PC-3 (cell line): ENCODE measurements at regions of chr2 and their contacts with region 1.

Region 1: GRCh38 chr2:201949181-201949926 is 84.3 kb upstream of the FZD7 start:
- DNase-seq: no peak
- ATAC-seq: no peak
- H3K4me3 ChIP-seq: no peak overlapping the region
- H3K27ac ChIP-seq: no peak overlapping the region
- H3K4me1 ChIP-seq: no peaks in the 10 kb centered on the region
- H3K27me3 ChIP-seq: no peaks in the 10 kb centered on the region
- CTCF ChIP-seq: no peak

Region 2: DNA sequence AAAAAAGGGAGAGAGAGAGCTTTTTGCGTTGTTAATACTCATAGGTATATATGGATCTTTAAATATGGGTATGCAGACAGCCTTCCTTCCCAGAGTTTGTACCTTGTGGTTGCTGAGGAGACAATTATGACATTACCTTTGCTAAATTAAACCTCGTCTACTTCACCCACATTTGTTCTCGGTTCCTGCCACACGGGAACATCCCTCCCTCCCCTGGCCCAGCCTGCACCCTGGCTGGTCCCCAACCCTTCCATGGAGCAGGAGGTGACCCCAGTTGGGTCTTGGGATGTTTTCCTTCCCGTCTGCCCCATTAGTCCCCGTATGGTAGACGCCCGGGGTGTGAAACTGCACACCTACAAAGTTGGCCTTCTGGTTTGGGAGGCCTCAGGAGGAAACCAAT is 21.0 kb before region 1 on chr2:
- CTCF ChIA-PET with region 1: interaction called, 10 read pairs
- POLR2A ChIA-PET with region 1: no interaction called
- intact Hi-C with region 1: no loop called
- DNase-seq: no peak
- ATAC-seq: no peak
- H3K4me3 ChIP-seq: no peak overlapping the region
- H3K27ac ChIP-seq: no peak overlapping the region
- H3K4me1 ChIP-seq: no peaks in the 10 kb centered on the region
- H3K27me3 ChIP-seq: 0 out of 2 replicates have a peak, but pooled peaks cover 3% of the 10 kb centered on the region
- CTCF ChIP-seq: no peak

Region 3: DNA sequence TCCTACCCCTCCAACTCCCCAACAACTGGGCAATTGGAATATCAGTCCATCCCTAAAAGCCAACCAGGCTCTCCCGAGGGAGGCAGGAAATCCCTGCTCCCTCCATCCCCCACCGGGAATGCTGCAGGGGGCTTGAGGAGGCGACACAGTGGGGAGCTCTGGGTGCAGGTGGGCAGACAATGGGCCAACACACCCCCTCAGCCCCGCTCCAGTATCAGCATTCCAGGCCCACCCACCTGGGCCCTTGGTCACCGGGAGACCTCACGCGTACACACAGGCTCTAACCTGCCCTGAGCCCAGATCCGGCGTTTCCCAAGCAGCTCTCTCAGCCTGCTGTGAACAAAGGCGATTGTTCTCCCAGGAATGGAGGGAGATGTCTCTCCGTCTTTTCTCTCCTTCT is 46.7 kb after region 1 on chr2:
- CTCF ChIA-PET with region 1: no interaction called
- POLR2A ChIA-PET with region 1: no interaction called
- intact Hi-C with region 1: no loop called
- DNase-seq: no peak
- ATAC-seq: no peak
- H3K4me3 ChIP-seq: no peak overlapping the region
- H3K27ac ChIP-seq: no peak overlapping the region
- H3K4me1 ChIP-seq: peaks cover 14% of the 10 kb centered on the region
- H3K27me3 ChIP-seq: no peaks in the 10 kb centered on the region
- CTCF ChIP-seq: no peak